ENCODE measurements at regions of chr14 and their contacts with region 1.

Region 1: DNA sequence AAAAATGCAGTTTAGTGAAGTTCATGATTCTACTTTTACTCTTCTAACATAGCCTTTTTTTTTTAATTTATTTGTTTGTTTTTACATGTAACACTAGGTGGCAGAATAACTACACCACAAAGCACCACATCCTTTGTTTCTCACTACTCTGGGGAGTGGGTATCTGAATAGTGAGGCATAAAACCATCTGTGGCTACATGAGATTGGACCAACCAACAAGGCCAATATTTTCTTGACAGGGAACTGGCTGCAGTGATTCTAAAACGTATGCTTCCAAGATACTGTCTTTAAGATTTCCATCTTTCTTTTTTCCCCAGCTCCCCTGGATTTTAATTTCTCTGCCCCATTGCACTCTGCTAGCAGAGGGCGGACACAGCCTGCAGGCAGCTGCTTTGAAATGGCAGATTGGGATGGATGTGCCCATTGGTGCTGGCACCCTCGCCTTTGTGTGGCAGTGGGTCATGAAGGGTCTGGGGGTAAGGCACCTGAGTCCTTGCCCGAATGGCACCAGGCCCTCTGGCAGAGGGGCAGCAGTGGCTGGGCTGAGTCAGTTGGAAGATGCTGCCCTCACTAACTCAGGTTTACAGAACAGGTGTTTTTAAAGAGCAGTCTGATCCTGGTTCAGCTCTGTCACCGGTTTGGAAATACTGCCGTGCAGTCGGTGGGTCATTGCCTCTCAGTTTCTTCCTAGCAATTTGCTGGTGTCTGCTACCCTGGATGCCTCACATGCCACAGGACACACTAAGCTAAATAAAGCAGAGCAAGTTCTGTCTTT is 429.1 kb downstream of the RAD51B start:
- DNase-seq: peak; percentile 80
- ATAC-seq: peak; percentile 83
- H3K4me3 ChIP-seq: no peak overlapping the region
- H3K4me3 Mint-ChIP-seq: peak overlapping the region; percentile 5
- H3K27ac ChIP-seq: peak overlapping the region; percentile 39 to 73
- H3K27ac Mint-ChIP-seq: peak overlapping the region; percentile 88
- H3K4me1 ChIP-seq: peaks cover 40 to 54% of the 10 kb centered on the region in 2 donors
- H3K4me1 Mint-ChIP-seq: peaks cover 65% of the 10 kb centered on the region
- H3K27me3 ChIP-seq: no peaks in the 10 kb centered on the region
- H3K27me3 Mint-ChIP-seq: no peaks in the 10 kb centered on the region
- CTCF ChIP-seq: peak; percentile 85

Region 2: GRCh38 chr14:67943947-67944346 is 304.7 kb before region 1 on chr14:
- CTCF ChIA-PET with region 1: interaction called, 17 read pairs
- POLR2A ChIA-PET with region 1: interaction called, 4 read pairs
- intact Hi-C with region 1: loop called (anchors 1 kb)
- DNase-seq: peak; percentile 77
- ATAC-seq: peak; percentile 60
- H3K4me3 ChIP-seq: no peak overlapping the region
- H3K4me3 Mint-ChIP-seq: no peak overlapping the region
- H3K27ac ChIP-seq: no peak overlapping the region
- H3K27ac Mint-ChIP-seq: no peak overlapping the region
- H3K4me1 ChIP-seq: peaks cover 0 to 3% of the 10 kb centered on the region in 2 donors
- H3K4me1 Mint-ChIP-seq: peaks cover 5% of the 10 kb centered on the region
- H3K27me3 ChIP-seq: no peaks in the 10 kb centered on the region
- H3K27me3 Mint-ChIP-seq: no peaks in the 10 kb centered on the region
- CTCF ChIP-seq: peak; percentile 84

Region 3: DNA sequence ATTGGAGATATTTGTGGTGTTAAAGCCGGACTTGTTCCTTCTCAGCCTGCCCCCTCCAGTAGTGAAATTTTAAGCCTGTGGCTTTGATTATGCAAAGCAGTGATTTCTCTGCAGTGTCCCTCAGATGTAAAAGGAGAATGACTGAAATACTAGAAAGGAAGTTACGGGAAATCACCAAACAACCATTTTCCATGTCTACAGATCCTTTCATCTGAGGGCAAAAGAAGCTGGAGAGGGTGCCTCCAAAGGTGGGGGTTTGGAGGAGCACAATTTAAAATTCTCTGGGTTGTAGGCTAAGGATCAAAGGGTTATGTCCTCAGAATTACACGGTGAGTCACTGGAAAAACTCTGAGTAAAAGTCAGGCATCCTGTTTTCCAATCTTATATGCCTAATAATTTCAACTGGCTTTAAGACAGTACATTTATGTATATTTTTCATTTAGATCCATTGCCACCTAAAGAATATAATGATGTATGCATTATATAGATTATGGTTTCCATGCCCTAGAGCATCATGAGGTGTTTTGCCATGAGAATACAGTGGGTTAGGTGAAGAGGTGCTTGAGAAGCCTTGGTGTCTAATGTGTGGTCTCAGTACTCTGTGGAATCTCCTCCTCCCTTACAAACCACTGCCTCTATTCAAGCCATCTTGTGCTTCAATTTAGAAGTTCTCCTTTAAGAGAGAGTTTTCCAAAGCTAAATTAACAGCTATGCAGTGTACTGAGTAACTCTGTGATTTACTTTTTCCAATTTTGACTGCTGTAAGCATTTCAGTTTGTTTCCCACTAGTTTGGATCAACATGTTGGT is 66.9 kb before region 1 on chr14:
- CTCF ChIA-PET with region 1: no interaction called
- POLR2A ChIA-PET with region 1: no interaction called
- intact Hi-C with region 1: no loop called
- DNase-seq: no peak
- ATAC-seq: no peak
- H3K4me3 ChIP-seq: no peak overlapping the region
- H3K4me3 Mint-ChIP-seq: no peak overlapping the region
- H3K27ac ChIP-seq: no peak overlapping the region
- H3K27ac Mint-ChIP-seq: no peak overlapping the region
- H3K4me1 ChIP-seq: peaks cover 4 to 7% of the 10 kb centered on the region in 2 donors
- H3K4me1 Mint-ChIP-seq: peaks cover 24% of the 10 kb centered on the region
- H3K27me3 ChIP-seq: no peaks in the 10 kb centered on the region
- H3K27me3 Mint-ChIP-seq: no peaks in the 10 kb centered on the region
- CTCF ChIP-seq: no peak

Region 4: DNA sequence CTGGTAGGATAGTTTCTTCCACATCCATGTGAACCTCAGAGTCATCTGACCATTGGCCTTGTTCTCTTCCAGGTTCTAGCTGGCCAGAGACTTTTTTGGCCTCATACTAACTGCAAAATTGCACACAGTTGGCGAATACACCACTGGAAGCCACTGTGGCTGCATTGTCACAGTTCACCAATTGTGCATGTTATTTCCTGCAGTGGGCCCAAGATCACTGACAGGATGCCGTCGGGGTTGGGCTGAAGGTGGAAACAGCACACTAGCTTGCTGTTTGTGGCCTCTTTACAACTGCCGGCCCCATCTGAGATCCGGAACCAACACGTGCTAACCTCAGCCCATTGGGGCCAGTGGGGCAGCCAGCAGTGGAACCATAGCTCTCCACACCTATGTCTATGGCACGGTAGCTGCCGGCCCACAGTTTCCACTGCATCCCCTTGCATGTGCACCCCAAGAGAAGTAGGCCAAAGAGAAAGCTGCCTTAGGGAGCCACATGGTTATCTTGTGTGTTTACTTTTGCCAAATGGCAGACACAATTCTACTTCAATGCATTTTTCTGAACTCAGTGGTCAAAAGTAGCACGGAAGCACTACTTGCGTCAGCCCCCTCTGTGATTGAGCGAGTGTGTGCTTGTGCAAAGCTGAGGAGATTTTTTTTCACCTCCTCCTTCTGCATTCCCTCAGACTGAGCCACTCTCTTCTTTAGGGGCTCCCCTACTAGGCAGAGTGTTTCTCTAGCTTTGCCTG is 34.9 kb after region 1 on chr14:
- CTCF ChIA-PET with region 1: interaction called, 110 read pairs
- POLR2A ChIA-PET with region 1: interaction called, 16 read pairs
- intact Hi-C with region 1: loop called (anchors 1 kb)
- DNase-seq: peak; percentile 87
- ATAC-seq: peak; percentile 69
- H3K4me3 ChIP-seq: peak overlapping the region in 3 of 5 experiments; percentile 5 to 31 (median 7)
- H3K4me3 Mint-ChIP-seq: peak overlapping the region; percentile 83
- H3K27ac ChIP-seq: peak overlapping the region; percentile 91 to 98
- H3K27ac Mint-ChIP-seq: peak overlapping the region; percentile 98
- H3K4me1 ChIP-seq: peaks cover 93 to 96% of the 10 kb centered on the region in 2 donors
- H3K4me1 Mint-ChIP-seq: peaks cover 95% of the 10 kb centered on the region
- H3K27me3 ChIP-seq: no peaks in the 10 kb centered on the region
- H3K27me3 Mint-ChIP-seq: no peaks in the 10 kb centered on the region
- CTCF ChIP-seq: no peak

Region 5: DNA sequence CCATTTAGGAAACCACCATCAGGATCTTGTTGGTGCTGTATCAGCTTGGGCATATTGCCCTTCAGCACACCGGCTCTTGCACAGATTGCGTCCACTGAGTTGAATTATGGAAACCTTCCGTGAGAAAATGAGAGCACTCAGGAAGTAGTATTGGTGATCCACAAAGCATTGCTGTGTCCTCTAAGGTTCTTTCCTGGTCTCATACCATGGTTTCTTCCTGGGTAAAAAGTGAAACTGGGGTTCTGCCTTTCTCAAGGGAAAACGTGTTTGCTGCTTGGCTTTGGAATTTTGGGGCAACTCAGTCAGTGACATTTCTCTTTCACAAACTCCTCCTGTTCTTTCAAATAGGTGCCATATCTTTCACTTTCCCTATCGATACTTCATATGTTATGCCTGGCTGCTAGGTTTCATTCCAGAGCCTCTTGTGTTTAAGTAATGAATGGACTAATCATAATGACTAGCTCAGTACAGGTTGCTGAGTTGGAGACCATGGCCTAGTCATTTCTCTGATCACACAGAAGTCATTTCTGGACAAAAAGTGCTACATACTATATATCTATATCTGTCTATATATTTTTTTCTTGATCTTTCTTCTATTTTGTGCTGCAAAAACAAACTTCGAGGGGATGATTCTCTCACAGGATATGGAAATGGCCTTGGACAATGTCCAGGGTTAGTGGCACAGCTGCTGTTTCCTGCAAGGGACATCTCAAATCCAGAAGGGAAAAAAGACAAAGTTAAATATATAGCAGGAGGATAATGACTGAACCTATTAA is 120.8 kb after region 1 on chr14:
- CTCF ChIA-PET with region 1: interaction called, 21 read pairs
- POLR2A ChIA-PET with region 1: interaction called, 4 read pairs
- intact Hi-C with region 1: loop called (anchors 2 kb)
- DNase-seq: peak; percentile 52
- ATAC-seq: peak; percentile 4
- H3K4me3 ChIP-seq: peak overlapping the region in 4 of 5 experiments; percentile 1 to 20 (median 14)
- H3K4me3 Mint-ChIP-seq: peak overlapping the region; percentile 73
- H3K27ac ChIP-seq: peak overlapping the region; percentile 78 to 84
- H3K27ac Mint-ChIP-seq: peak overlapping the region; percentile 97
- H3K4me1 ChIP-seq: peaks cover 78 to 92% of the 10 kb centered on the region in 2 donors
- H3K4me1 Mint-ChIP-seq: peaks cover 93% of the 10 kb centered on the region
- H3K27me3 ChIP-seq: no peaks in the 10 kb centered on the region
- H3K27me3 Mint-ChIP-seq: no peaks in the 10 kb centered on the region
- CTCF ChIP-seq: no peak

Region 6: DNA sequence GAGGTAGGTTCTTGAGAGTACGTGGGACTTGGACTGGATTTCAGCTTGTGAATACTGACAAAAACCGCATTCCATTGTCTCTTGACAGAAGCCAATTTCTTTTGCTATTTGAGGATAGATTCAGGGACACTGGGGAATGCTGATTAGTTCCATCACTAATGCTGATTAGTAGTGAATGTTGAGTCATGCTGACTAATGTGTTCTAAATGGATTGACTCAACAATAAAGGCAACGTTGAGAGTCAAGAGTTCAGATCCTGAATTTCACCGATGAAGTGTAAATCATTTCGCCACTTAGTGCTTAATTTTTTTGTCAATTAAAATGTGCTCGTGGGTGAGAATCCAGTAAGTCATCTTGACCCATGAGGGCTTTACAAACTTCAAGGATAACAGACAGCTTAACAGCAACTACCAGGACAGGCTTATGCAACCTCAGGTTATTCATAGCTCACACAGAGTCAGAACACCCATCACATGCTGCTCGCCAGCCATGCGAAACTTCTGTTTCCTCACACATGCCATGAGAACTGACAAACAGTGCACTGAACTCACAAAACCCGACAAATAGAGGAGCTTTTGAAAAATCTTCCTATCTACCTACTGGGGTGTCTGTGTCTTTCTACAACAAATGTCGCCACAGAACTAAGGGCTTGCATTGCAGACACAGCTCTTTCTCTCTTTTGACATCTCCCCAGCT is 227.7 kb after region 1 on chr14:
- CTCF ChIA-PET with region 1: interaction called, 7 read pairs
- POLR2A ChIA-PET with region 1: no interaction called
- intact Hi-C with region 1: loop called (anchors 1 kb)
- DNase-seq: peak; percentile 89
- ATAC-seq: peak; percentile 90
- H3K4me3 ChIP-seq: peak overlapping the region in 1 of 5 experiments; percentile 21
- H3K4me3 Mint-ChIP-seq: peak overlapping the region; percentile 72
- H3K27ac ChIP-seq: peak overlapping the region; percentile 95 to 99
- H3K27ac Mint-ChIP-seq: peak overlapping the region; percentile 98
- H3K4me1 ChIP-seq: peaks cover 73 to 77% of the 10 kb centered on the region in 2 donors
- H3K4me1 Mint-ChIP-seq: peaks cover 84% of the 10 kb centered on the region
- H3K27me3 ChIP-seq: no peaks in the 10 kb centered on the region
- H3K27me3 Mint-ChIP-seq: no peaks in the 10 kb centered on the region
- CTCF ChIP-seq: no peak

Region 7: GRCh38 chr14:68734231-68734775 is 485.6 kb after region 1 on chr14:
- CTCF ChIA-PET with region 1: no interaction called
- POLR2A ChIA-PET with region 1: no interaction called
- intact Hi-C with region 1: loop called (anchors 5 kb)
- DNase-seq: peak; percentile 30
- ATAC-seq: peak; percentile 74
- H3K4me3 ChIP-seq: peak overlapping the region in 1 of 5 experiments; percentile 25
- H3K4me3 Mint-ChIP-seq: peak overlapping the region; percentile 66
- H3K27ac ChIP-seq: peak overlapping the region; percentile 8 to 64
- H3K27ac Mint-ChIP-seq: peak overlapping the region; percentile 75
- H3K4me1 ChIP-seq: peaks cover 41 to 58% of the 10 kb centered on the region in 2 donors
- H3K4me1 Mint-ChIP-seq: peaks cover 72% of the 10 kb centered on the region
- H3K27me3 ChIP-seq: no peaks in the 10 kb centered on the region
- H3K27me3 Mint-ChIP-seq: no peaks in the 10 kb centered on the region
- CTCF ChIP-seq: no peak

Region 8: GRCh38 chr14:68843471-68844209 is 595.0 kb after region 1 on chr14:
- CTCF ChIA-PET with region 1: interaction called, 66 read pairs
- POLR2A ChIA-PET with region 1: interaction called, 4 read pairs
- intact Hi-C with region 1: loop called (anchors 1 kb)
- DNase-seq: peak; percentile 80
- ATAC-seq: peak; percentile 82
- H3K4me3 ChIP-seq: peak overlapping the region in 3 of 5 experiments; percentile 18 to 50 (median 24)
- H3K4me3 Mint-ChIP-seq: peak overlapping the region; percentile 62
- H3K27ac ChIP-seq: no peak overlapping the region
- H3K27ac Mint-ChIP-seq: no peak overlapping the region
- H3K4me1 ChIP-seq: peaks cover 6 to 7% of the 10 kb centered on the region in 2 donors
- H3K4me1 Mint-ChIP-seq: peaks cover 14% of the 10 kb centered on the region
- H3K27me3 ChIP-seq: no peaks in the 10 kb centered on the region
- H3K27me3 Mint-ChIP-seq: peaks cover 6% of the 10 kb centered on the region
- CTCF ChIP-seq: peak; percentile 93

Measured in B cell (primary cell).